ENCODE measurements at regions of chr12 and their contacts with region 1.

Region 1: DNA sequence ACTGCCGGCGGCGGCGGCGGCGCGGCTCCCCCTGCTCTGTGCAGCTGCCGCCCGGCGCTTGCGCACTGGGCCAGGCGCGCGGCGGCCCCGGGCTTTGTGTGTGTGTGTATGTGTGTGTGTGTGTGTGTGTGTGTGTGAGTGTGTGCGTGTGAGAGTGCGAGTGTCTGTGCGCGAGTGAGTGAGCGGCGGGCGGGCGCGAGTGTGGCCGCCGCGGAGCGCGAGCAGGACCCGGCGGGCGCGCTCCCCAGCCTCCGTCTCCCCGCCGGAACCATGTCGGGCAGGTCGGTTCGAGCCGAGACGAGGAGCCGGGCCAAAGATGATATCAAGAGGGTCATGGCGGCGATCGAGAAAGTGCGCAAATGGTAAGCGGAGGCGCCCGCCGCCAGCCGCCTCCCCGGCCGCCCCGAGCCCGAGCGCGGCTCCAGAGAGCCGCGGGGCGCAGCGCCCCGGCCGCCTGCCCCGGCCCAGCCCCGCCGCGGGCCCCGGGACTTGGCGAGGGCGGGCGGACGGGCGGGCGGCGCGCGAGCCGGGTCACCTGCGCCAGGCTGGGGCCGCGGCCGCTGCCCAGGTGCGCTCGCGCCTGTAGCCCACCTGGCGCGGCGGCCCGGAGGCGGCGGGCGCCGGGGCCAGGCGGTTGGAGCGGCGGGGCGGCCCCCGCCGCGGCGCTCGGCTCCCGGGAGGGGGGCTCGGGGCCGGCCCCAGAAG is at the start of gene BCL7A:
- DNase-seq: peak; percentile 75
- ATAC-seq: peak; percentile 83
- H3K4me3 Mint-ChIP-seq: peak within 1 kb of the TSS; percentile 85
- H3K27ac Mint-ChIP-seq: peak within 1 kb of the TSS; percentile 78
- H3K4me1 Mint-ChIP-seq: peaks cover 5% of the 10 kb centered on the region
- H3K27me3 Mint-ChIP-seq: peaks cover 13% of the 10 kb centered on the region
- total RNA-seq, gene BCL7A: 6.4 to 6.6 TPM

Region 2: DNA sequence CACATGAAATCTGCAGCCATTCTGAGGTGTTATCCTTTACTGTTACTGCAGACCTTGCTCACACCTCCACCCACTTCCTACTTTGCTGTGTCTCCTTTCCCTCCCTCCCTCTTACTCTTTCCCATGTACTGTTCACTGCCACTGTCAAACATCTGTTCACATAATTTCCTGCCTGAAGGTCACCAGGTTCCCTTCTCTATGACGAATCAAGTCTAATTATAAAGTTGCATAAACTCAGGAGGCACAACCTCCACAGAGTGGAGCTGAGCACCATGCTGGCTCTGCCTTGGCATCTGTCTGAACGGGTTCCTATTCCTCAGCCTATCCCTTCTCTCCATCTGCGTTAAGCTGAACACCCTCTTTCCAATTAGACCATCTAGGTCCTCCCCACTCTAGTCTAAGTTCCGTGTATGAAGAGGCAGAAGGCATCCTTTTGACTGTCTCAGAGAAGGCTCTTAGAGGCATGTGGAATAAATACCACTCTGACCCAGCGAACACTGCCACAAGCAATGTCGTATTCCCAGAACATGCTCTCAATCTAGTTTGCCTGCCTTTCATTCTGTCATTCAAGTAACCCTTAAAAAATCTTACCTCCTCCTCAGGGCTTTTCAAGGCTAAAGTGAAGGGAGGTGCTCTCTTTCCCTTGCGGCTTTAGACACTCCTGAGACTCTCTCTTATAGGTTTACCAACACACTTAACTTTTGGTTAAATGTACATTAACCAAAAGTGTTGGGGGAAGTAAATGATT is 1247.6 kb before region 1 on chr12:
- CTCF ChIA-PET with region 1: no interaction called
- POLR2A ChIA-PET with region 1: no interaction called
- intact Hi-C with region 1: no loop called
- DNase-seq: no peak
- ATAC-seq: peak; percentile 89
- H3K4me3 Mint-ChIP-seq: no peak overlapping the region
- H3K27ac Mint-ChIP-seq: peak overlapping the region; percentile 64
- H3K4me1 Mint-ChIP-seq: peaks cover 26% of the 10 kb centered on the region
- H3K27me3 Mint-ChIP-seq: no peaks in the 10 kb centered on the region

Region 3: DNA sequence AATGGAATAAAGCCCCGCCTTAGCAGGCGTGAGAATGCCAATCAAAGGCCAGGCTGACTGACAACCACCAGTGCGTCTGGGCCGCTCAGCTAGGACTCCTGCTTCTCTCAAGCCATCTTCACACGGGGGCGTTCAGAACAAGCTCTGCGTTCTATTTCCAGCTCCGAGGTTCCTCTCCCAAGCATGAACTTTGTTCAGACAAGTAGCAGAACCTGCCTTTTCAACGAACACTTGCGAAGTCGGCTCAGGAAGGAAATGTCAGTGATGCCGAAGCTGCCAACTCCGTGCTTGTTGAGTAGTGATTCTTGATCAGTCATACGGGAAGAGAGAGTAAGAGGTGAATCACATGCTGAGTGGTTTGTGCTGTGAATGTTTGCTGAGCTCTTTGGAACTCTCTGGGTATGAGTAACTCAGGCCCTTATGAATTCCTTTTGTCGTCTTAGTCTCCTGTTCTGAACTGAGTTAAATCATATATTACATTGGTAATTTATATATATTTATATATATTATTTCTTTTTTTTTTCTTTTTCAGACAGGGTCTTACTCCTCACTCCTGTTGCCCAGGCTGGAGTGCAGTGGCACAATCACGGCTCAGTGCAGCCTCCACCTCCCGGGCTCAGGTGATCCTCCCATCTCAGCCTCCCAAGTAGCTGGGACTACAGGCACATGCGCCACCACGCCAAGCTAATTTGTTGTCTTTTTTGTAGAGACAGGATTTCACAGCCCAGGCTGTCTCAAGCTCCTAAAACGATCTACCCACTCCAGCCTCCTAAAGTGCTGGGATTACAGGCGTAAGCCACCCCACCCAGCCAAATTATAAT is 29.7 kb before region 1 on chr12:
- CTCF ChIA-PET with region 1: interaction called, 4 read pairs
- POLR2A ChIA-PET with region 1: interaction called, 5 read pairs
- intact Hi-C with region 1: loop called in 1 of 2 experiments (anchors 2 kb)
- DNase-seq: peak; percentile 84
- ATAC-seq: peak; percentile 100
- H3K4me3 Mint-ChIP-seq: peak overlapping the region; percentile 30
- H3K27ac Mint-ChIP-seq: peak overlapping the region; percentile 83
- H3K4me1 Mint-ChIP-seq: peaks cover 23% of the 10 kb centered on the region
- H3K27me3 Mint-ChIP-seq: peaks cover 5% of the 10 kb centered on the region